ENCODE measurements at regions of chr11 and their contacts with region 1.

Region 1: GRCh38 chr11:103682318-103683184 is 353.9 kb upstream of the DDI1 start:
- DNase-seq: peak; percentile 80 to 82
- H3K4me3 ChIP-seq: no peak overlapping the region
- H3K4me3 Mint-ChIP-seq: no peak overlapping the region
- H3K27ac Mint-ChIP-seq: no peak overlapping the region
- H3K4me1 ChIP-seq: no peaks in the 10 kb centered on the region
- H3K4me1 Mint-ChIP-seq: peaks cover 7% of the 10 kb centered on the region
- H3K27me3 ChIP-seq: no peaks in the 10 kb centered on the region
- H3K27me3 Mint-ChIP-seq: peaks cover 3% of the 10 kb centered on the region
- CTCF ChIP-seq: peak; percentile 90 to 96

Region 2: GRCh38 chr11:103338621-103339484 is 343.7 kb before region 1 on chr11:
- CTCF ChIA-PET with region 1: no interaction called
- POLR2A ChIA-PET with region 1: no interaction called
- intact Hi-C with region 1: loop called (anchors 1 kb)
- DNase-seq: peak; percentile 69 to 79
- H3K4me3 ChIP-seq: no peak overlapping the region
- H3K4me3 Mint-ChIP-seq: no peak overlapping the region
- H3K27ac Mint-ChIP-seq: no peak overlapping the region
- H3K4me1 ChIP-seq: no peaks in the 10 kb centered on the region
- H3K4me1 Mint-ChIP-seq: no peaks in the 10 kb centered on the region
- H3K27me3 ChIP-seq: no peaks in the 10 kb centered on the region
- H3K27me3 Mint-ChIP-seq: no peaks in the 10 kb centered on the region
- CTCF ChIP-seq: peak; percentile 53 to 84

Region 3: GRCh38 chr11:103659206-103659618 is 23.3 kb before region 1 on chr11:
- CTCF ChIA-PET with region 1: no interaction called
- POLR2A ChIA-PET with region 1: no interaction called
- intact Hi-C with region 1: no loop called
- DNase-seq: peak; percentile 53 to 57
- H3K4me3 ChIP-seq: no peak overlapping the region
- H3K4me3 Mint-ChIP-seq: no peak overlapping the region
- H3K27ac Mint-ChIP-seq: no peak overlapping the region
- H3K4me1 ChIP-seq: no peaks in the 10 kb centered on the region
- H3K4me1 Mint-ChIP-seq: no peaks in the 10 kb centered on the region
- H3K27me3 ChIP-seq: no peaks in the 10 kb centered on the region
- H3K27me3 Mint-ChIP-seq: no peaks in the 10 kb centered on the region
- CTCF ChIP-seq: peak; percentile 72 to 76

Region 4: DNA sequence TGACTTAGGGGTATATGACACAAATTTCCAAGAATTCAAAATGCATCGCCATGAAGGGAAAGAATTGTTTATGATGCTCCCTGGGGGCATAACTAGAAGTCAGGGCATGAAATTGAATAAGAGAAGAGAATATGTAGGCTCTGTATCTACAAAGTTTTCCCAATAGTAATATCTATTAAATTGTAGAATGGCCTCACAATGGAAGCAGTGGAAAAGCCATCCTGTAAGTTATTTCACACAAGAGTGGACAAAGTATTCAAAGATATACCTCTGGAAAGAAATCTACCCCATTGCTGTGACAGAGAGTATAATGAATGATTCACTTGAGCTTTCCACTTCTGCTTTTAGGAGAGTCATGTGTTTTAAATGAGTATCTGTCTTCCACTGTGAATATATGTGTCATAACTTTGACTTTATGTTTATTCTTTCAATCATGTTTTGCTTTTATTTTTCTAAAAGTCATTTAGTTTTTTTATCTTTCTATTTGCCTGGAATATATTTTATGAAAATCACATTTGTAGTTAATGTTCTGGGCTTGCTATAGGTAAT is 288.2 kb after region 1 on chr11:
- CTCF ChIA-PET with region 1: interaction called, 3 read pairs
- POLR2A ChIA-PET with region 1: no interaction called
- intact Hi-C with region 1: loop called (anchors 10 kb)
- DNase-seq: no peak
- H3K4me3 ChIP-seq: no peak overlapping the region
- H3K4me3 Mint-ChIP-seq: no peak overlapping the region
- H3K27ac Mint-ChIP-seq: no peak overlapping the region
- H3K4me1 ChIP-seq: no peaks in the 10 kb centered on the region
- H3K4me1 Mint-ChIP-seq: no peaks in the 10 kb centered on the region
- H3K27me3 ChIP-seq: no peaks in the 10 kb centered on the region
- H3K27me3 Mint-ChIP-seq: peaks cover 12% of the 10 kb centered on the region
- CTCF ChIP-seq: no peak

Region 5: GRCh38 chr11:104222464-104222863 is 539.9 kb after region 1 on chr11:
- CTCF ChIA-PET with region 1: no interaction called
- POLR2A ChIA-PET with region 1: no interaction called
- intact Hi-C with region 1: loop called (anchors 1 kb)
- DNase-seq: peak in 1 of 2 experiments; percentile 11
- H3K4me3 ChIP-seq: no peak overlapping the region
- H3K4me3 Mint-ChIP-seq: no peak overlapping the region
- H3K27ac Mint-ChIP-seq: no peak overlapping the region
- H3K4me1 ChIP-seq: no peaks in the 10 kb centered on the region
- H3K4me1 Mint-ChIP-seq: no peaks in the 10 kb centered on the region
- H3K27me3 ChIP-seq: no peaks in the 10 kb centered on the region
- H3K27me3 Mint-ChIP-seq: peaks cover 5% of the 10 kb centered on the region
- CTCF ChIP-seq: peak in 1 of 2 experiments; percentile 26

Region 6: DNA sequence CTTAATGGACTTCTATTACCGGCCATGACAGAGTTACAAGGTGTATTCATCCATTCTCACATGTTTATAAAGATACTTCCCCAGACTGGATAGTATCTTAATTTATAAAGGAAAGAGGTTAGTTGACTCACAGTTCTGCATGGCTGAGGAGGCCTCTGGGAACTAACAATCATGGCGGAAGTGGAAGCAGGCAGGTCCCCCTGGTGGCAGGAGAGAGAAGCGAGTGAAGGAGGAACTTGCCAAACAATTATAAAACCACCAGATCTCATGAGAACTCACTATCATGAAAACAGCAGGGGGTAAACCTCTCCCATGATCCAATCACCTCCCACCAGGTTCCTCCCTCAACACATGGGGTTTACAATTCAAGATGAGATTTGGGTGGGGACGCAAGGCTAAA is 651.4 kb after region 1 on chr11:
- CTCF ChIA-PET with region 1: interaction called, 4 read pairs
- POLR2A ChIA-PET with region 1: no interaction called
- intact Hi-C with region 1: loop called (anchors 1 kb)
- DNase-seq: peak; percentile 63 to 66
- H3K4me3 ChIP-seq: no peak overlapping the region
- H3K4me3 Mint-ChIP-seq: no peak overlapping the region
- H3K27ac Mint-ChIP-seq: no peak overlapping the region
- H3K4me1 ChIP-seq: no peaks in the 10 kb centered on the region
- H3K4me1 Mint-ChIP-seq: no peaks in the 10 kb centered on the region
- H3K27me3 ChIP-seq: no peaks in the 10 kb centered on the region
- H3K27me3 Mint-ChIP-seq: peaks cover 3% of the 10 kb centered on the region
- CTCF ChIP-seq: peak; percentile 59 to 79